ENCODE measurements at regions of chr3 and their contacts with region 1.

Region 1: DNA sequence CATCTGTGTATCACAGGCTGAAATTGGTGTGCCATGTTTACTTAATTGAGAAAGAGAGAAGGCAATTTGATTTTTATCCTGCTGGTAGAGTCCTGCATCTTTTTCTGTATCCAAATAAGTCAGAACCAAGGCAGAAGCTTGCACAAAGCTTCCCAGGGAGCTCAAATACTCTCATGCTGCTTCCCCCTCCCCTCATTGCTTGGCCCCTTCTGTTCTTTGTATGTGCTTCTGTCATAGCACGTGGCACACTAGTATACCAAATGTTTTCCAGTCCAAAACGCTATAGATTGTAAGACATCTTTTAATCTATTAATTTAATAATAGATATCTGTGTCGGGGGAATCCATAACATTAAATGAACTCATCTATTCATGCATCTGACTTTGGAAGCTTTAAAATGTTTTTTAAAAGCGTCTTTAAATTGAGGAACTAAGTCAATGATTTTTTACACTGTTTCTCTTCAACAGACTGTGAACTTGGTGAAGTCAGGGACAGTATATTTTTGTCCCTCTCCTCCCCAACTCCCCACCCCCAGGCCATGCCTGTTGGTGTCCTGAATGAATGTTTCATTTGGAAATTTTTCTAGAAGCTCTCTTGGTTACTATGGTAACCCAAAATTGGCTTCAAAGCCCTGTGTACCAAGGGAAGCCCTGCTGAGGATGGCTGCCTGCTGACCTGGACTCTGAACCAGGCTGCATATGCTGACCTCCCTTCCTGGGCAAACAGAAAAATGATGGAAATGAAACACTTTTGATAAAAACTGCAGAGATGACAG is 26.2 kb upstream of the SLC35G2 start:
- DNase-seq: no peak
- H3K4me3 ChIP-seq: no peak overlapping the region
- H3K27ac ChIP-seq: no peak overlapping the region
- H3K4me1 ChIP-seq: no peaks in the 10 kb centered on the region
- H3K27me3 ChIP-seq: no peaks in the 10 kb centered on the region
- CTCF ChIP-seq: no peak

Region 2: GRCh38 chr3:136250226-136250902 is 542.4 kb before region 1 on chr3 and contains the start of gene PCCB:
- CTCF ChIA-PET with region 1: interaction called, 11 read pairs
- POLR2A ChIA-PET with region 1: no interaction called
- intact Hi-C with region 1: no loop called
- DNase-seq: peak; percentile 90 to 97
- H3K4me3 ChIP-seq: peak within 1 kb of the TSS; percentile 51
- H3K27ac ChIP-seq: peak within 1 kb of the TSS; percentile 75
- H3K4me1 ChIP-seq: peaks cover 28% of the 10 kb centered on the region
- H3K27me3 ChIP-seq: no peaks in the 10 kb centered on the region
- CTCF ChIP-seq: peak; percentile 73
- total RNA-seq, gene PCCB: 46.8 and 49.3 TPM in 2 replicates

Region 3: GRCh38 chr3:136818769-136819391 is 26.1 kb after region 1 on chr3 and contains the start of gene SLC35G2:
- CTCF ChIA-PET with region 1: interaction called, 24 read pairs
- POLR2A ChIA-PET with region 1: no interaction called
- intact Hi-C with region 1: no loop called
- DNase-seq: peak in 1 of 2 experiments; percentile 40
- H3K4me3 ChIP-seq: peak within 1 kb of the TSS; percentile 67
- H3K27ac ChIP-seq: peak within 1 kb of the TSS; percentile 53
- H3K4me1 ChIP-seq: peaks cover 19% of the 10 kb centered on the region
- H3K27me3 ChIP-seq: no peaks in the 10 kb centered on the region
- CTCF ChIP-seq: 0 out of 2 replicates have a peak, but pooled peaks have one; percentile 17
- total RNA-seq, gene SLC35G2: 3.1 and 5.0 TPM in 2 replicates